Activated CD8-positive, alpha-beta T cell treated with anti-CD3 and anti-CD28 coated beads, Interleukin-2, amount 10 ng/mL, durations not matched to agents 7 days and 5 days (primary cell): ENCODE measurements at regions of chr1 and their contacts with region 1.

Region 1: DNA sequence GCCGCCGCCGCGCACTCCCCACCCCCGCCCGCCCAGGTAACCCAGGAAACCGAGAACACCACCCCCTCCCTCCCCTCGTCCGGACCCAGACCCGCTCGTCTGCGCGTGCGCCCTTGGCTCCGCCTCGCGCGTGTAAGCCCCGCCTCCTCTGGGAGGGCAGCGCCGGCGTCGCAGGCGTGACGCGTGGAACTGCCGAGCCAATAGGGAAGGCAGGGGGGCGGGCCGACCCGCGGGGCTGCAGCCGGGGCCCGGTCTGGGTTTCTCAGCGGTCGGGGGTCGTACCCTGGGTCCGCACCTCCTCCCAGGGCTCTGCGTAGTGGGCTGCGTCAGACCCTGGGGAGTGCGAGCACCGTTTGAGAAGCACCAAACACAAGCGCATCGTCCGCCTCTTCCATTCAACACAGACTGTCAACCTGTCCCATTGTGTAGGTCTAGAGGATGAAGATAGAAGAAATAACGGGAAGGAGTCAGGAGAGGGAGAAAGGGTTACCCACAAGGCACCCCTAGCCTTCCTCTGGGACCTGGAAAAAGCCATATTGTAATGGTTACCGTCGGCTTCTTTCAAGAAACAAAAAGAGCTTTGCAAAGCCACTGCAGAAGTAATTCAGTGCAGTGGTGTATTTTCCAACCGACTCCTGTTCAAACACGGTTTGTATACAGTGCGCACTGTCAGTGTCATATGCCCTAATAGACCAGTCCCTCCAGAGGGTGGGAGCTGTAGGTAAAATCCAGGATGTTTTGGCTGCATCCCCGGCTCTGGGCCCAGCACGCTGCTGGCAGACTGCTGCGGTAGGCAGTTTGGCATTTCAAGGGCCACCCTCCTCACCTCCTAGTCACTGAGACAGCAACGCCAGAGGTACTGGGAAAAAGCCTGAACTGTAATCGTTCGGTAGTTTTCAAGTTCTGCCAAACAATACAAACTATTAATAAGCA is 473 bp upstream of the LYST start:
- DNase-seq: peak; percentile 97
- ATAC-seq: peak; percentile 70
- H3K4me3 Mint-ChIP-seq: peak overlapping the region; percentile 86
- H3K27ac Mint-ChIP-seq: peak overlapping the region; percentile 96
- H3K4me1 Mint-ChIP-seq: peaks cover 40% of the 10 kb centered on the region
- H3K27me3 Mint-ChIP-seq: no peaks in the 10 kb centered on the region

Region 2: GRCh38 chr1:235843461-235843961 is 23.7 kb before region 1 on chr1:
- CTCF ChIA-PET with region 1: interaction called, 31 read pairs
- POLR2A ChIA-PET with region 1: interaction called, 8 read pairs
- DNase-seq: no peak
- ATAC-seq: peak; percentile 65
- H3K4me3 Mint-ChIP-seq: no peak overlapping the region
- H3K27ac Mint-ChIP-seq: no peak overlapping the region
- H3K4me1 Mint-ChIP-seq: peaks cover 57% of the 10 kb centered on the region
- H3K27me3 Mint-ChIP-seq: no peaks in the 10 kb centered on the region

Region 3: DNA sequence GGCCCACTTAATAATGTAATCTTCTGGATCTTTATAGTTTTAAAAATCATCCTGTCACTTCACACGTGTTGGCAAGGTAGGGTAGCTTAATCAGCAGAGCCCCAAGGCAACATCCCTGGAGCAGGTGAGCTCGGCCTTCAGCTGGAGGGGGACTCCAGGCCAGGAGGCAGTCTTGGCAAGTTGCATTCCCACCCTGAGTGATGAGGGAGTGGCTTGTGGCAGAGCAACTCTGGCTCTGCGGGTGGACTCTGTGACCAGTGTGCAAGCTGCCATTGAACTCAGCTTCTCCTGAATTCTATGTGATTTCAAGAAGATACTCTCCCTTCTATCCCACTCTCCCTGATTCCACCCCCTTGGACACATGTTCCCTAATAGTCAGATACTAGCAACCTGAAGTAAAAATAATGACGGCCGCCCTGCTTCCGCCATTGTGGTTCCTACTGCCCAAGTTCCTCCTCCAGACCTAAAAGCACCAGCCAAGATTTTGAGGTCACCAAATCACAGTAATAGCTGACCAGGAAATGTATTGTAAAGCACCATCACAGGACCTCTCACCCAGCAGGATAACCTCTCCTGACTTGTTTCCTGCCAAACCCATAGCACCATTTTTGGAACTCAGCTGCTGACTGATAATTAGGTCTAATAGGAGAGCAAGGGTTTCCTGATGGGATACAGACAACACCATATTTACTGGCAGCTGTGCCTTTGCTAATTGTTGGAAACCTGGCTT is 11.1 kb after region 1 on chr1:
- CTCF ChIA-PET with region 1: interaction called, 10 read pairs
- POLR2A ChIA-PET with region 1: interaction called, 43 read pairs
- DNase-seq: no peak
- ATAC-seq: no peak
- H3K4me3 Mint-ChIP-seq: no peak overlapping the region
- H3K27ac Mint-ChIP-seq: no peak overlapping the region
- H3K4me1 Mint-ChIP-seq: peaks cover 48% of the 10 kb centered on the region
- H3K27me3 Mint-ChIP-seq: no peaks in the 10 kb centered on the region

Region 4: GRCh38 chr1:235923466-235924021 is 56.4 kb after region 1 on chr1:
- CTCF ChIA-PET with region 1: interaction called, 10 read pairs
- POLR2A ChIA-PET with region 1: interaction called, 4 read pairs
- DNase-seq: peak; percentile 47
- ATAC-seq: peak; percentile 61
- H3K4me3 Mint-ChIP-seq: peak overlapping the region; percentile 2
- H3K27ac Mint-ChIP-seq: peak overlapping the region; percentile 69
- H3K4me1 Mint-ChIP-seq: peaks cover 24% of the 10 kb centered on the region
- H3K27me3 Mint-ChIP-seq: no peaks in the 10 kb centered on the region

Region 5: GRCh38 chr1:235946571-235946981 is 79.4 kb after region 1 on chr1:
- CTCF ChIA-PET with region 1: interaction called, 16 read pairs
- POLR2A ChIA-PET with region 1: interaction called, 4 read pairs
- DNase-seq: no peak
- ATAC-seq: peak; percentile 46
- H3K4me3 Mint-ChIP-seq: no peak overlapping the region
- H3K27ac Mint-ChIP-seq: no peak overlapping the region
- H3K4me1 Mint-ChIP-seq: peaks cover 13% of the 10 kb centered on the region
- H3K27me3 Mint-ChIP-seq: no peaks in the 10 kb centered on the region

Region 6: DNA sequence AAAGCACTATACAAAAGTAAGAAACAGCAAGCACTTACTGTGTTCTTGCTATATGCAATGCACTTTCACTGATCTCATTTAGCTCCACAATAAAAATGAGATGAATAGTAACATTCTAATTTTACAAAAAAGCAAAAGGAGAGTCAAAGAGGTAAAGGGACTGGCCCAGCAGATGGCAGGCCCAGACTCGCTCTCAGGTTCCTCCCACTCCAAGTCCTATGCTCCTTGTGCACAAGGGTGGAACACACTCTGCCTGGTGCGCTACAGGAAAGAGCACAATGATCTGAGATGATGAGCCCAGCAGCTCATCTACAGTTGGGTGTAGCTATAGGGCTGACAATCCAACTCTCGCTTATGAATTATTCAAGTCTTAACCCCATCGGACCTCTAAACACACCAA is 93.6 kb after region 1 on chr1:
- CTCF ChIA-PET with region 1: interaction called, 12 read pairs
- POLR2A ChIA-PET with region 1: interaction called, 8 read pairs
- DNase-seq: no peak
- ATAC-seq: no peak
- H3K4me3 Mint-ChIP-seq: no peak overlapping the region
- H3K27ac Mint-ChIP-seq: no peak overlapping the region
- H3K4me1 Mint-ChIP-seq: peaks cover 15% of the 10 kb centered on the region
- H3K27me3 Mint-ChIP-seq: no peaks in the 10 kb centered on the region